HepG2 (cell line): ENCODE measurements at regions of chr9 and their contacts with region 1.

Region 1: DNA sequence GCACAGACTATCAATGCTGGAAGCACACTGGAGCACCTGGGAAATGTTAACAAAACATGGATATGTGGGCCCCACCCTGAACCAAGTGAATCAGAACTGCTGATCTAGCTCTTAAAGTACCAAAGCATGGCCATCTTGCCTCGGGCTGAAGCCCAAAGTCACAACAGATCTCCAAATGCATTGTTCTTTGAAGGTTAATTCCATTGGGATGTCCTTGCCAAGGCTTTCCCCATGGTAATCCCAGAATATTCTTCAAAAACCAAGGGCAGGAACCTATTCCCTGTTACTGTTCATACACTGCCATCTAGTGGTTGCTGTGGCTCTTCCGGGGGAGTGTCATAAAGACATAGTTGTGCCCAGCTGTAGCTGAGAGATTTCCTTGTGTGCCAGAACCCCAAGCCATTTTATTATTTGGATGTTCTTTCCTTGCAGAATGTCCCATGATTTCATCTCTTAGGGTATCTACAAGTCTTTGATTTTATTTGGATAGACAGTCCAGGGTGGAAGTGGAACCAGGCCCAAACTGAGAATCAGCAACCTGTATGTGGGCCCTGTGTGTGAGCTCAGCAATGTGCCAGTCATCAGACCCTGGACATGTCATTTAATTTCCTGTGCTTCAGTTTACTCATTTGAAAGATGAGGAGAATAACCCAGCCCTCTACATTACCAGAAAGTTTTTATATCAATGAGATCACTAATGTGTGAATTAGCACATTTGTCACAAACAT is 290.0 kb downstream of the ACTL7B start:
- DNase-seq: peak; percentile 76
- ATAC-seq: peak; percentile 95
- H3K4me3 ChIP-seq: no peak overlapping the region
- H3K27ac ChIP-seq: no peak overlapping the region
- H3K4me1 ChIP-seq: peaks cover 18% of the 10 kb centered on the region
- H3K27me3 ChIP-seq: peaks cover 0 to 4% of the 10 kb centered on the region in 2 experiments; a peak in 1 of 5 replicates
- CTCF ChIP-seq: peak; percentile 90
- EP300 ChIP-seq: no peak
- POLR2A ChIP-seq: no peak
- RAD21 ChIP-seq: peak; percentile 85

Region 2: GRCh38 chr9:107425101-107426045 is 1140.4 kb before region 1 on chr9:
- CTCF ChIA-PET with region 1: interaction called, 9 read pairs
- POLR2A ChIA-PET with region 1: no interaction called
- in situ Hi-C with region 1: loop called (anchors 25 kb)
- intact Hi-C with region 1: loop called (anchors 1 kb)
- DNase-seq: peak; percentile 50
- ATAC-seq: peak; percentile 87
- H3K4me3 ChIP-seq: peak overlapping the region in 1 of 3 experiments; percentile 59; a peak in 2 of 6 replicates
- H3K27ac ChIP-seq: no peak overlapping the region
- H3K4me1 ChIP-seq: peaks cover 5% of the 10 kb centered on the region; the same call in 1 of the 2 replicates
- H3K27me3 ChIP-seq: 0 out of 5 replicates have a peak, but pooled peaks cover 0 to 4% of the 10 kb centered on the region in 2 experiments
- CTCF ChIP-seq: peak; percentile 86
- EP300 ChIP-seq: no peak
- POLR2A ChIP-seq: no peak
- RAD21 ChIP-seq: no peak; the same call in 1 of the 2 replicates

Region 3: GRCh38 chr9:107489687-107490605 is 1075.9 kb before region 1 on chr9 and contains the start of gene KLF4:
- CTCF ChIA-PET with region 1: no interaction called
- POLR2A ChIA-PET with region 1: no interaction called
- in situ Hi-C with region 1: loop called (anchors 25 kb)
- intact Hi-C with region 1: no loop called
- DNase-seq: peak; percentile 62
- ATAC-seq: peak; percentile 82
- H3K4me3 ChIP-seq: peak within 1 kb of the TSS; percentile 40 to 64 (median 49); a peak in 5 of 6 replicates
- H3K27ac ChIP-seq: no peak within 1 kb of the TSS
- H3K4me1 ChIP-seq: peaks cover 16% of the 10 kb centered on the region
- H3K27me3 ChIP-seq: peaks cover 0 to 49% of the 10 kb centered on the region in 2 experiments; a peak in 3 of 5 replicates
- CTCF ChIP-seq: no peak
- EP300 ChIP-seq: no peak
- POLR2A ChIP-seq: no peak
- RAD21 ChIP-seq: no peak
- total RNA-seq, gene KLF4: 0.20 TPM in 1 of 2 replicates, not detected in the other

Region 4: GRCh38 chr9:108412755-108413154 is 153.1 kb before region 1 on chr9:
- CTCF ChIA-PET with region 1: interaction called, 15 read pairs
- POLR2A ChIA-PET with region 1: no interaction called
- in situ Hi-C with region 1: loop called (anchors 5 kb)
- intact Hi-C with region 1: loop called (anchors 1 kb)
- DNase-seq: no peak
- ATAC-seq: no peak
- H3K4me3 ChIP-seq: no peak overlapping the region
- H3K27ac ChIP-seq: no peak overlapping the region
- H3K4me1 ChIP-seq: peaks cover 5% of the 10 kb centered on the region; the same call in 1 of the 2 replicates
- H3K27me3 ChIP-seq: no peaks in the 10 kb centered on the region
- CTCF ChIP-seq: no peak
- EP300 ChIP-seq: no peak
- POLR2A ChIP-seq: no peak
- RAD21 ChIP-seq: no peak

Region 5: GRCh38 chr9:108761655-108762347 is 196.0 kb after region 1 on chr9:
- CTCF ChIA-PET with region 1: interaction called, 6 read pairs
- POLR2A ChIA-PET with region 1: no interaction called
- in situ Hi-C with region 1: no loop called
- intact Hi-C with region 1: loop called (anchors 2 kb)
- DNase-seq: peak; percentile 47
- ATAC-seq: peak; percentile 93
- H3K4me3 ChIP-seq: peak overlapping the region in 2 of 3 experiments; percentile 41; a peak in 3 of 6 replicates
- H3K27ac ChIP-seq: no peak overlapping the region
- H3K4me1 ChIP-seq: peaks cover 16% of the 10 kb centered on the region
- H3K27me3 ChIP-seq: no peaks in the 10 kb centered on the region
- CTCF ChIP-seq: peak; percentile 87
- EP300 ChIP-seq: no peak
- POLR2A ChIP-seq: no peak
- RAD21 ChIP-seq: peak; percentile 82